Gastrocnemius medialis (tissue), 4 donors: ENCODE measurements at regions of chr7 and their contacts with region 1.

Region 1: GRCh38 chr7:74617180-74617744 is 40.3 kb upstream of the GTF2I start:
- DNase-seq: peak; percentile 78 to 87
- ATAC-seq: peak; percentile 80 to 85
- H3K4me3 ChIP-seq: peak overlapping the region in 1 of 4 donors; percentile 10
- H3K27ac ChIP-seq: peak overlapping the region; percentile 69 to 84 (median 74)
- H3K4me1 ChIP-seq: peaks cover 3 to 23% of the 10 kb centered on the region in 2 donors
- H3K27me3 ChIP-seq: no peaks in the 10 kb centered on the region
- CTCF ChIP-seq: no peak
- POLR2A ChIP-seq: no peak

Region 2: DNA sequence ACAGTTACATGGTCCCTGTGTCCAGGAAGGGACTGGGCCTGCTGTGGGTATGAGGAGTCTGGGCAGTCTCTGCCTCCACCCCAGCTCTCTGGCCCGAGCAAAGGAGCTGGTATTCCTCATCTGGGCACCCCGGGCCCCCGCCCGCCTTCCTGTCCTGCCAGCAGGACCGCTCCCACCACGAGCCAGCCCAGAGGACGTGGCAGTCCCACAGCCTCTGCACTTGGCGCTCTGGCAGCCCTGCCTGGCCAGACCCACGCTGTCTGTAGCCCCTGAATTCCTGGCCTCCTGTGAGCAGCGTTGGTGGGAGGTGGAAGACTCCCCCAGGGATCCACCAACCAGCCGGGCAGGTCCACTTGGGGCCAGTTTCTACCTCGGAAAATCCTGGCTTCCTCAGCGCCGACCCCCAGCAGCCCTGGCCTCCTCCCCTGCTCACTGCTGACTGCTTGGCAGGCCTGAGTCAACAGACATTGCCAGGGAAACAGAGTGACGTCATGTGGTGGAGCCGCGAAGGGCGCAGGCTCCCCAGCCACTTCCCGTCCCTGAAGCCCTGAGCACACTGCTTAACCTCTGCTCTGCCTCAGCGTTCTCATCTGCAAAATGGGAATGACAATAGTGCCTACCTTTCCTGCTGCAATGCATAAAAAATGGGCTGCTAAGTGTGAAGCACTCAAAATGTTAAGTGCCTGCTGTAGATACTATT is 555.3 kb before region 1 on chr7:
- in situ Hi-C with region 1: no loop called
- intact Hi-C with region 1: no loop called
- DNase-seq: peak in 1 of 2 donors; percentile 54
- ATAC-seq: peak; percentile 52 to 65
- H3K4me3 ChIP-seq: no peak overlapping the region
- H3K27ac ChIP-seq: peak overlapping the region; percentile 38 to 52 (median 46)
- H3K4me1 ChIP-seq: peaks cover 3 to 18% of the 10 kb centered on the region in 2 donors
- H3K27me3 ChIP-seq: no peaks in the 10 kb centered on the region
- CTCF ChIP-seq: no peak
- POLR2A ChIP-seq: peak in 1 of 2 donors; percentile 11

Region 3: DNA sequence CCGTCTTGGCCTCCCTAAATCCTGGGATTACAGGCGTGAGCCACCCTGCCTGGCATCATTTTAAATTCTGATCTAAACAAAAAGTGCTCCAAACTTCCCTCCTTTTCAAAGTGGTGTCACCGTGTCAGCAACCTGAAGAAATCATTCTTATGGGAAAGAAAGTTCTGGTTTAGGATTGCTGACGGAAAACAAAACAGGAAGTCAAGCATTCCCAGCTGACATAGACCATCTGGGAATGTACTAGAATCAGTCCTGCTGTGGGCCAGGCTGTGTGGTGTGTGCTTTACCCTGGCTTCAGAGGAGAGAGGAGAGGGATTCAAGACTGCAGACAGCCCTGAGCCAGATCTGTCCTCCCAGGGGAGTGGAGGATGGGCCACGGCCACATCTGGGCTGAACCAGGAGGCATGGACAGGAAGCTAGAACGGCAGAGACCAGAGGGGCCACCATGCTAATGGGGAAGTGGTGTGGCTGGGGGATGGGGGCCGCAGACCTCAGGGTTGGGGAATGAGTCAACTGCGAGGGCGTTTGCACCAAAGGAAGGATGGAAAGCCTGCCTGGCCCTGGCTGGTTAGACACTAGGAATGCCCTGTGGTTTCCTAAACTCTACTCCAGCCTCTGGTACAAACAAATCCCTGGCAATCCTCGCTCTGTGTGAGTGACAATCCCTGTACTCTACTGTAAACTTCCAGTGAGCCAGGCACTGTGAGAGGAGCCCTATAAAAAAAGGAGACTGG is 344.8 kb before region 1 on chr7:
- in situ Hi-C with region 1: no loop called
- intact Hi-C with region 1: no loop called
- DNase-seq: peak; percentile 32 to 57
- ATAC-seq: peak; percentile 58 to 61
- H3K4me3 ChIP-seq: peak overlapping the region in 2 of 4 donors; percentile 3 to 13
- H3K27ac ChIP-seq: peak overlapping the region; percentile 67 to 77 (median 74)
- H3K4me1 ChIP-seq: peaks cover 0 to 5% of the 10 kb centered on the region in 2 donors
- H3K27me3 ChIP-seq: no peaks in the 10 kb centered on the region
- CTCF ChIP-seq: no peak
- POLR2A ChIP-seq: peak in 1 of 2 donors; percentile 23

Region 4: DNA sequence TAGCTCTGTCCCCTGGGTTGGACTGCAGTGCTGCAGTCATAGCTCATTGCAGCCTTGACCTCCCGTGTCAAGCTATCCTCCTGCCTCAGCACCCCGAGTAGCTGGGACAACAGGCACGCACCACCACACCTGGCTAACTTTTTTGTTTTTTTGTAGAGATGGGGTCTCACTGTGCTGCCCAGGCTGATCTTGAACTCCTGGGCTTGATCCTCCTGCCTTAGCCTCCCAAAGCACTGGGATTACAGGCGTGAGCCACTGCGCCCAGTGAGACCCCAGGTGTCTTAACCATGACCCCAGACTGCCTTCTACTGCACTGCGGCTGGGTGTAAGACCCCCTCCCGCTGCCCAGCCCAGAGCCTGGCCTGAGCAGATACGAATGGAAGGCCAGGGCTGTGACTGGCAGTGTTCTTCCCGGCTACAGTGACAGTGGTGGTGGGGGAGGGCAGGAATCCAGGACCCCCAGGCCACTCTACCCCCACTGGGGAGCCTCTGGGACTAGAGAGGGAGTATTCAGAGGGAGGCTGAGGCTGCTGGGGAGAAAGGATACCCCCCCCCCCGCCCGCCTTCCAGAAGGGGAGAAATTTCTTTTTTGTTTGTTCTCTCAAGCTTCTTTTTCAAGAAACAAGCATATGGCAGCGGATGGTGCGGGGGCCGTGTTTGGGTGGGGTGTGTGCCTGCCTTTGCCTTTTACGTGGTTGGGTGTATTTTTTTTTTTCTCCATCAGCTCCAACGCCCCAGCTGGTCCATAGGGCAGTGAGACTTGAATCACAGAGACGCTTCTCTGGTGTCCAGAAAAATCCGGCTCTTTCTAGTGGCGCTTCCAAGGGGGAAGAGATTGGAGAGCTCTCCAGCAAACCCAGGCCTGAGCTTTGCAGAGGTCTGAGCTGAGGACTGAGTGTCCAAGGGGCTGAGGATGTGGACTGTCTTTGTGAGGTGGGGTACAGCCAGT is 127.0 kb before region 1 on chr7:
- in situ Hi-C with region 1: no loop called
- intact Hi-C with region 1: no loop called
- DNase-seq: no peak
- ATAC-seq: no peak
- H3K4me3 ChIP-seq: no peak overlapping the region
- H3K27ac ChIP-seq: peak overlapping the region; percentile 46 to 100 (median 75)
- H3K4me1 ChIP-seq: peaks cover 8 to 30% of the 10 kb centered on the region in 2 donors
- H3K27me3 ChIP-seq: no peaks in the 10 kb centered on the region
- CTCF ChIP-seq: no peak
- POLR2A ChIP-seq: no peak

Region 5: GRCh38 chr7:74502181-74502891 is 114.9 kb before region 1 on chr7:
- in situ Hi-C with region 1: no loop called
- intact Hi-C with region 1: no loop called
- DNase-seq: peak; percentile 93 to 97
- ATAC-seq: peak; percentile 76 to 81
- H3K4me3 ChIP-seq: no peak overlapping the region
- H3K27ac ChIP-seq: peak overlapping the region; percentile 87 to 94 (median 90)
- H3K4me1 ChIP-seq: peaks cover 14 to 37% of the 10 kb centered on the region in 2 donors
- H3K27me3 ChIP-seq: no peaks in the 10 kb centered on the region
- CTCF ChIP-seq: peak in 2 of 5 experiments; percentile 7 to 23
- POLR2A ChIP-seq: peak; percentile 26 to 46

Region 6: GRCh38 chr7:74672343-74672915 is 55.2 kb after region 1 on chr7:
- in situ Hi-C with region 1: no loop called
- intact Hi-C with region 1: loop called (anchors 5 kb)
- DNase-seq: no peak
- ATAC-seq: peak in 1 of 2 donors; percentile 13
- H3K4me3 ChIP-seq: no peak overlapping the region
- H3K27ac ChIP-seq: peak overlapping the region; percentile 35 to 69 (median 60)
- H3K4me1 ChIP-seq: peaks cover 38 to 39% of the 10 kb centered on the region in 2 donors
- H3K27me3 ChIP-seq: no peaks in the 10 kb centered on the region
- CTCF ChIP-seq: no peak
- POLR2A ChIP-seq: no peak